Dendritic cell treated with granulocyte-macrophage colony-stimulating factor and Interleukin-4, amounts not matched to agents 40 ng/mL and 50 ng/mL, for 4 days (primary cell): ENCODE measurements at regions of chr14 and their contacts with region 1.

Region 1: GRCh38 chr14:105527661-105528581 is 1.5 kb downstream of the TMEM121 start:
- H3K4me3 Mint-ChIP-seq: peak overlapping the region; percentile 80
- H3K27ac Mint-ChIP-seq: peak overlapping the region; percentile 73
- H3K4me1 Mint-ChIP-seq: peaks cover 28% of the 10 kb centered on the region
- H3K27me3 Mint-ChIP-seq: peaks cover 76% of the 10 kb centered on the region

Region 2: DNA sequence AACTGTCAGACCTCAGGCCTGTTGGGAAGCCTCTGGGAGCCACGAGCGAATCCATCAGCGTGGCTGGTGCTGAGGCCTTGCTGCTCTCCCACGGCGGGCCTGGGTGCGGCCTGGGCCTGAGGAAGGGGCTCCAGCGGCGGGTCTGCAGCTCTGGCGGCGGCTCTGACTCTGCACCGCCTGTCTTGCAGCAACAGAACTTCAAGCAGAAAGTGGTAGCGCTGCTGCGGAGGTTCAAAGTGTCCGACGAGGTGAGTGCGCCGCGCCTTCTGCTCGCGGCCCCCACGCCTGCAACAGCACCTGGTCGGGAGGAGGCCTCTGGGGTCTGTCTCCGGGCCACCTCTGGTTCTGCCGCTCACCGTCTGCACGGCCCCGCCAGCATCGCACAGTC is 158.3 kb before region 1 on chr14:
- intact Hi-C with region 1: loop called (anchors 2 kb)
- H3K4me3 Mint-ChIP-seq: no peak overlapping the region
- H3K27ac Mint-ChIP-seq: no peak overlapping the region
- H3K4me1 Mint-ChIP-seq: peaks cover 13% of the 10 kb centered on the region
- H3K27me3 Mint-ChIP-seq: no peaks in the 10 kb centered on the region

Region 3: GRCh38 chr14:105448706-105449111 is 79.2 kb before region 1 on chr14:
- intact Hi-C with region 1: loop called (anchors 2 kb)
- H3K4me3 Mint-ChIP-seq: no peak overlapping the region
- H3K27ac Mint-ChIP-seq: no peak overlapping the region
- H3K4me1 Mint-ChIP-seq: no peaks in the 10 kb centered on the region
- H3K27me3 Mint-ChIP-seq: no peaks in the 10 kb centered on the region